ENCODE measurements at regions of chr18 and their contacts with region 1.

Region 1: GRCh38 chr18:35040988-35041814 is at the start of gene MAPRE2:
- DNase-seq: peak; percentile 100
- H3K4me3 Mint-ChIP-seq: peak within 1 kb of the TSS; percentile 98
- H3K27ac Mint-ChIP-seq: peak within 1 kb of the TSS; percentile 98
- H3K4me1 Mint-ChIP-seq: peaks cover 54% of the 10 kb centered on the region
- H3K27me3 Mint-ChIP-seq: no peaks in the 10 kb centered on the region
- total RNA-seq, gene MAPRE2: 46.8 and 52.5 TPM in 2 replicates

Region 2: DNA sequence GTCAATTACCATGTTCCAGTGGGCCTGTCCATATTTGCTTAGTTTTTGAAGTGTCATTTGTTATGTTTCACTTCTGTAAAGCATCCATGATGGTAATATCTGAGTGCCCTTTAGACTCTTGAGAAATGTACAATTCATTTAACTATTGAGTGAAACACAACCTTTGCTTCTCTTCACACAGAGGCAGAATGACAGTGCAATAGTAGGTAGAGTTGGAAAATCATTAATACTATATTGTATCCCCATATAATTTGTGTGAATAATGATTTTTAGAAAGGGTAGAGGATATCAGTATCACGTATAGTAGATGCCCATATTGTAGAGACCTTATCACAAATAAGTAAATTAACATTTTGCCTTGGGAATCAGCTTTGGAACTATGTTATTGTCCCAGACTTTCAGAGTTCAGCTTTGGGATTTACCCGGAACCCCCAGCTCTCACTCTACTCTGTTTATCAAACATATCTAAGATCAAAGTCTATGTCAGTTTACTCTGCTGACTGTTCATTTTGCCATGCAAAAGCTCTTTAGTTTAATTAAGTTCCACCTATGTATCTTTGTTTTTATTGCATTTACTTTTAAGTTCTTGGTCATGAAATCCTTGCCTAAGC is 643.8 kb before region 1 on chr18:
- intact Hi-C with region 1: no loop called
- DNase-seq: no peak
- H3K4me3 Mint-ChIP-seq: no peak overlapping the region
- H3K27ac Mint-ChIP-seq: no peak overlapping the region
- H3K4me1 Mint-ChIP-seq: no peaks in the 10 kb centered on the region
- H3K27me3 Mint-ChIP-seq: no peaks in the 10 kb centered on the region

Region 3: DNA sequence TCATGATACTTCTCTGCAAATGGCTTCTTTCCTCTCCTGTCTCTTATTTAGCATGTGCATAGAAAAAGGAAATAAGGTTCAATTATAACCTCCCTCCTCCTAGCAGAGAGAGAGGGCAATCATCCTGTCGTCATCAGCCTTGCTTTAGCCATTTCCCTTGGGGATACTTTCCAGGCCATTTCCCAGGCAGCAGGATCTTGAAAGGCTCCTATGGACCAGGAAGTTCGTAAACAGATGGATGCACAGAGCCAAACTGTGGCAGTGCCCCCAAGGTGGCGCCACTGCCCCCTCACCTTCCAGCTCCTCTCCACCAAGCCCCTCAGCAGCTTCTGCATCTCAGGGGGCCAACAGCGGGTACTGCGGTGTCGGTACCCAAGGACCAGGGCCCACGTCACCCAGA is 173.7 kb before region 1 on chr18:
- intact Hi-C with region 1: loop called (anchors 2 kb)
- DNase-seq: no peak
- H3K4me3 Mint-ChIP-seq: no peak overlapping the region
- H3K27ac Mint-ChIP-seq: peak overlapping the region; percentile 26
- H3K4me1 Mint-ChIP-seq: peaks cover 26% of the 10 kb centered on the region
- H3K27me3 Mint-ChIP-seq: peaks cover 6% of the 10 kb centered on the region

Region 4: GRCh38 chr18:35005963-35006577 is 35.1 kb before region 1 on chr18:
- intact Hi-C with region 1: loop called (anchors 1 kb)
- DNase-seq: peak; percentile 80
- H3K4me3 Mint-ChIP-seq: no peak overlapping the region
- H3K27ac Mint-ChIP-seq: no peak overlapping the region
- H3K4me1 Mint-ChIP-seq: no peaks in the 10 kb centered on the region
- H3K27me3 Mint-ChIP-seq: peaks cover 6% of the 10 kb centered on the region

Region 5: GRCh38 chr18:35095983-35096676 is 54.9 kb after region 1 on chr18:
- intact Hi-C with region 1: loop called (anchors 5 kb)
- DNase-seq: no peak
- H3K4me3 Mint-ChIP-seq: no peak overlapping the region
- H3K27ac Mint-ChIP-seq: no peak overlapping the region
- H3K4me1 Mint-ChIP-seq: peaks cover 5% of the 10 kb centered on the region
- H3K27me3 Mint-ChIP-seq: no peaks in the 10 kb centered on the region

Region 6: DNA sequence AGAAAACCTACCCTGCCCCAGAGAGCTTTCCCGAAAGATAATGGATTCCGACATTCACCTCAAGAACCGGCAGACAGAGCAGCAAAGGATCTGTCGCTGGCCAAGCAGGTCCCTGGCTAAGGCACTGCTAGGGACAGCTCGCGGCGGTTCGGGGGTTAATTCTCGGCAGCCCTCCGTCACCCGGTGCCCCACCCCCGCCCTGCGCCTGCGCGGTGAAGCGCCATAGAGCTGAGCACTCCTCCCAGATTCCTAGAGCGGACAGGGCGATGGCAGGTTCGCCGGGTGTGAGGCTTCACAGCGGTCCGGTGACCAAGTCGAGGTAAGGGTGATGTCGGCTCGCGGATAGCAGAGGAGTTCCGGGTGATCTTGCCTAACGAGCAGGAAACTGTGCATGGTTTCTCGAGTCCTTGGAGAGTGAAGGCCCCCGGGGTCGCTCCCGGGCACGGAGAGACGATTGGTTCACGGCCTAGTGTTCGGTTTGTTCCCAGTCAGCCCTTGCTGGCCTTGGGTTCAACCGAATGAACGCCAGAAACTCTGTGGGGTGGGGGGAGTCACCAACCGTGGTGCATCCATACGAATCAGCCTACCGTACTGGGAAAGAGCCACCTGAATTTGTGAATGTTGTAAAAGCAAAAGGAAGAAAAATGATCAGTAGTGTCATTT is 249.0 kb after region 1 on chr18 and contains the start of gene ZSCAN30:
- intact Hi-C with region 1: loop called (anchors 5 kb)
- DNase-seq: peak; percentile 99
- H3K4me3 Mint-ChIP-seq: peak within 1 kb of the TSS; percentile 100
- H3K27ac Mint-ChIP-seq: peak within 1 kb of the TSS; percentile 95
- H3K4me1 Mint-ChIP-seq: peaks cover 37% of the 10 kb centered on the region
- H3K27me3 Mint-ChIP-seq: no peaks in the 10 kb centered on the region
- total RNA-seq, gene ZSCAN30: 11.6 and 12.2 TPM in 2 replicates

Region 7: GRCh38 chr18:35580701-35581539 is 539.7 kb after region 1 on chr18:
- intact Hi-C with region 1: loop called (anchors 5 kb)
- DNase-seq: peak; percentile 86
- H3K4me3 Mint-ChIP-seq: peak overlapping the region; percentile 73
- H3K27ac Mint-ChIP-seq: peak overlapping the region; percentile 66
- H3K4me1 Mint-ChIP-seq: peaks cover 22% of the 10 kb centered on the region
- H3K27me3 Mint-ChIP-seq: peaks cover 12% of the 10 kb centered on the region

Region 8: GRCh38 chr18:35972197-35973052 is 931.2 kb after region 1 on chr18 and contains the start of gene RMP24:
- intact Hi-C with region 1: loop called (anchors 5 kb)
- DNase-seq: peak; percentile 97
- H3K4me3 Mint-ChIP-seq: peak within 1 kb of the TSS; percentile 99
- H3K27ac Mint-ChIP-seq: peak within 1 kb of the TSS; percentile 92
- H3K4me1 Mint-ChIP-seq: peaks cover 43% of the 10 kb centered on the region
- H3K27me3 Mint-ChIP-seq: no peaks in the 10 kb centered on the region